Breast epithelium (tissue), 4 donors: ENCODE measurements at regions of chr10 and their contacts with region 1.

Region 1: DNA sequence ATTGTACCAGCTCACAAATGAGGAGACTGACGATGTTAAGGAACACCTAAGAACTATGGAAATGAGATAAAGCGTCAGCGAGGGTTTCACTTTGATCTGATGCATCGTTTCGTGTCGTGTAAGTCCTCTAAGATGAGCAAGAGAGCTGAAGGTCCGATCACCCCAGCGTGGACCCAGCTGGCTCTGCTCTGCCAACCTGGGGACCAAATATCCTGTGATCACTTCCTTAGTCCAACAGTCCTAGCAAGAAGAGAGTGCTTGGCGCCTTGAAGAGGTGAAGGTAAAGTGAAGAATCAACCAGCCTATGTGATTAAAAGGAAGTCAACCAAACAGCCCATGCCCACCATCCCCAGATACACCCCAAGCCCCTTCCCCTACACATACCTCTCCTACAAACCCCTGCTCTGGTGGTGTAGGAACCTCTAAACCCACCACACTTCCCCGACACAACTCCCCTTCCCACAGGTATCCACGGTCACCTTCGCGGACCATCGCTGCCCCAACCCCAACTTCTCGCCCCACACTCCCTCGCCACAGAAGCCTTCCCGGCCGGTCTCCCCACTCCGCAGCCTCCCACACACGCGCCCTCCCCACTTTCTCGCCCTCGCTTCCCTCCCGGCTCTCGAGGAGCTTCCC is 725 bp downstream of the UPF2 start:
- DNase-seq: no peak
- H3K4me3 ChIP-seq: peak overlapping the region; percentile 76 to 98 (median 96)
- H3K27ac ChIP-seq: peak overlapping the region; percentile 98
- H3K4me1 ChIP-seq: no peaks in the 10 kb centered on the region
- H3K27me3 ChIP-seq: no peaks in the 10 kb centered on the region
- CTCF ChIP-seq: no peak
- POLR2A ChIP-seq: no peak

Region 2: DNA sequence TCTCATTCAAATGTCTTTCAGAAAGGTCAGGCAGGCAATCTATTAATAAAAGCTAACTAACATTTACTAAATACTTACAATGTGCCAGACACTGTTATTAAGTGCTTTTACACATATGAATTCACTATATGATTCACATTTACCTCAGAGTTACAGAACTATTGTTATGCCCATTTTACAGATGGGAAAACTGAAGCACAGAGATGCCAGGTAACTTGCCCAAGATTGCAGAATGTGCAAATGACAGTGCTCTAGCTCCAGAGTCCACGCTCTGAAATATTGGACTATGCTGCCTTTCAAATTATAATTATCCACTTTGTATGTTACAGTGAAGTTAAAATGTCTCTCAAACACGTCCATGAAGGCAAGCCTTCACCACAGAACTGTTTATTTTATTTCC is 21.3 kb before region 1 on chr10:
- intact Hi-C with region 1: loop called (anchors 2 kb)
- DNase-seq: no peak
- H3K4me3 ChIP-seq: no peak overlapping the region
- H3K27ac ChIP-seq: no peak overlapping the region
- H3K4me1 ChIP-seq: no peaks in the 10 kb centered on the region
- H3K27me3 ChIP-seq: no peaks in the 10 kb centered on the region
- CTCF ChIP-seq: no peak
- POLR2A ChIP-seq: no peak

Region 3: DNA sequence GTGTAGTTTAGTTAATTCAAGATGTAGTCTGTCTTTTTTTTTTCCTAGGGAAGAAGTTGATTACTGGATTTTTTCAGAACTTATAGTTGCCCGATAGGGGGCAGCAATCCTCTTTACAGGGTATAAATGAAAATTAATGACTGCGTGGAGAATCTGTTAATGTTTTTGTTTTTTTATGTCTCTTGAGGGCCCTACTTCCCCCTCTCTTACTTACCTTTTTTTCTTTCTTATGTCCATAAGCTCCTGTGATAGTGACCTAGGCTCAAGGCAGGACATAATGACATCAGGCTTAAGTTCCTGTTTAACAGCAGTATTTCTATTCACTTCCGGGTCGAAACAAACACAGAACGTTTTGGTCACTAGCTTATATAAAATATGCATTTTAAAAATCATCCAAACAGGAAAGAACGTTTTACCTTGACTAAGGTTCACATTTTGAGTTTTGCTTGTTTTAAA is 172.9 kb after region 1 on chr10:
- intact Hi-C with region 1: no loop called
- DNase-seq: no peak
- H3K4me3 ChIP-seq: peak overlapping the region in 1 of 3 donors; percentile 2
- H3K27ac ChIP-seq: peak overlapping the region in 1 of 2 donors; percentile 19
- H3K4me1 ChIP-seq: no peaks in the 10 kb centered on the region
- H3K27me3 ChIP-seq: no peaks in the 10 kb centered on the region
- CTCF ChIP-seq: peak; percentile 27 to 44 (median 44)
- POLR2A ChIP-seq: no peak